Endothelial cell of umbilical vein (primary cell): ENCODE measurements at regions of chr4 and their contacts with region 1.

Region 1: DNA sequence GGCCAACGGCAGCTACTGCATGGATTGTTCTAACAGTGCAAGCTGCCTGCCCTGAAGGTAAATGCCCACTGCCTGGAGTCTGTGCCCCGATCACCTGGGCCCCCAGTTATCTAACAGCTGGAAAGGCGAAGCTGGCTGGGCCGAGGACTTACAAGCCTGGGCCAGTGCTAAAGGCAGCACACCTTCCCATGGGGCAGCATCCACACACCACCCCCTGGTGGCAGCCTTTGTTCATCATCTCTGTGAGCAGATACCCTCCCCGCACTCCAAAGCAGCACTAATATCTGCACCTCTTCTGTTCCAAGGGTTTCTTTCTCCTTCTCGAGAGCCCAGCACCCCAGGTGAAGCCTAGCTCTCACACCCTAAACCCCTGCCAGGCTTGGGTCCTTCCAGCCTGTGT is 7.6 kb downstream of the SLC2A9 start:
- DNase-seq: peak; percentile 32
- H3K4me3 ChIP-seq: no peak overlapping the region
- H3K27ac ChIP-seq: no peak overlapping the region
- H3K4me1 ChIP-seq: no peaks in the 10 kb centered on the region
- H3K27me3 ChIP-seq: peaks cover 0 to 2% of the 10 kb centered on the region in 2 experiments
- CTCF ChIP-seq: peak; percentile 33 to 71
- POLR2A ChIP-seq: no peak

Region 2: GRCh38 chr4:9704551-9705332 is 309.0 kb before region 1 on chr4:
- CTCF ChIA-PET with region 1: interaction called, 58 read pairs
- POLR2A ChIA-PET with region 1: no interaction called
- dilution Hi-C with region 1: no loop called
- intact Hi-C with region 1: loop called (anchors 1 kb)
- DNase-seq: no peak
- H3K4me3 ChIP-seq: no peak overlapping the region
- H3K27ac ChIP-seq: no peak overlapping the region
- H3K4me1 ChIP-seq: no peaks in the 10 kb centered on the region
- H3K27me3 ChIP-seq: no peaks in the 10 kb centered on the region
- CTCF ChIP-seq: no peak
- POLR2A ChIP-seq: no peak

Region 3: DNA sequence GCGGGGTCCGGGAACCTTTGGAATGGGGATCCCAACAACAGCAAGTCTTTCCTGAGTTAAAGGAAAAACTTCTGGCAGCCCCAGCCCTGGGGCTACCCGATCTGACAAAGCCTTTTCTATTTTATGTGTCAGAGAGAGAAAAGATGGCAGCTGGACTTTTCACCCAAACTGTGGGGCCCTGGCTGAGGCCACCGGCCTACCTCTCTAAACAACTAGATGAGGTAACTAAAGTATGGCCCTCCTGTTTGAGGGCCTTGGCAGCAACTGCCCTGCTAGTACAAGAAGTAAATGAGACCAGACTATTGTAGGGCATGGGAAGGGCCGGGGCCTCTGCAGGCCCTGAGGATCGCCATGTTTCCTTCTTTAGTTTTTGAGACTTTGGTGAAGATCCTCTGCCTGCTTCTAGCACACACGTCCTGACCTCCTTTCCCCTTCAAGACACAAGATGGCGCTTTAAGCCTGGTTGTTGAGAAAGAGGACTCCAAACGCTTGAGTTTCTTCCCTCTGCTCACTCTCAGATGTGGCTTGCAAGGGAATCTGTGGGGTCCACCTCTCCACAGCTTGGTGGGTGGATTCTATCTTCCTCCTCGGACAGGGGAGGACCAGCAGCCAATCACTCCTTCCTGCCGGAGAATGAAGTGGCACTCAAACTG is 250.8 kb before region 1 on chr4:
- CTCF ChIA-PET with region 1: interaction called, 118 read pairs
- POLR2A ChIA-PET with region 1: no interaction called
- dilution Hi-C with region 1: no loop called
- intact Hi-C with region 1: loop called (anchors 1 kb)
- DNase-seq: peak; percentile 56
- H3K4me3 ChIP-seq: no peak overlapping the region
- H3K27ac ChIP-seq: no peak overlapping the region
- H3K4me1 ChIP-seq: no peaks in the 10 kb centered on the region
- H3K27me3 ChIP-seq: no peaks in the 10 kb centered on the region
- CTCF ChIP-seq: peak; percentile 41 to 60
- POLR2A ChIP-seq: no peak

Region 4: GRCh38 chr4:9769321-9769720 is 244.4 kb before region 1 on chr4:
- CTCF ChIA-PET with region 1: interaction called, 118 read pairs
- POLR2A ChIA-PET with region 1: no interaction called
- dilution Hi-C with region 1: no loop called
- intact Hi-C with region 1: no loop called
- DNase-seq: no peak
- H3K4me3 ChIP-seq: no peak overlapping the region
- H3K27ac ChIP-seq: no peak overlapping the region
- H3K4me1 ChIP-seq: no peaks in the 10 kb centered on the region
- H3K27me3 ChIP-seq: no peaks in the 10 kb centered on the region
- CTCF ChIP-seq: no peak
- POLR2A ChIP-seq: no peak

Region 5: GRCh38 chr4:9859810-9860209 is 153.9 kb before region 1 on chr4:
- CTCF ChIA-PET with region 1: no interaction called
- POLR2A ChIA-PET with region 1: no interaction called
- dilution Hi-C with region 1: no loop called
- intact Hi-C with region 1: no loop called
- DNase-seq: no peak
- H3K4me3 ChIP-seq: no peak overlapping the region
- H3K27ac ChIP-seq: no peak overlapping the region
- H3K4me1 ChIP-seq: no peaks in the 10 kb centered on the region
- H3K27me3 ChIP-seq: no peaks in the 10 kb centered on the region
- CTCF ChIP-seq: no peak
- POLR2A ChIP-seq: no peak